Posterior cingulate gyrus (tissue), 11 donors: ENCODE measurements at regions of chr10 and their contacts with region 1.

Region 1: DNA sequence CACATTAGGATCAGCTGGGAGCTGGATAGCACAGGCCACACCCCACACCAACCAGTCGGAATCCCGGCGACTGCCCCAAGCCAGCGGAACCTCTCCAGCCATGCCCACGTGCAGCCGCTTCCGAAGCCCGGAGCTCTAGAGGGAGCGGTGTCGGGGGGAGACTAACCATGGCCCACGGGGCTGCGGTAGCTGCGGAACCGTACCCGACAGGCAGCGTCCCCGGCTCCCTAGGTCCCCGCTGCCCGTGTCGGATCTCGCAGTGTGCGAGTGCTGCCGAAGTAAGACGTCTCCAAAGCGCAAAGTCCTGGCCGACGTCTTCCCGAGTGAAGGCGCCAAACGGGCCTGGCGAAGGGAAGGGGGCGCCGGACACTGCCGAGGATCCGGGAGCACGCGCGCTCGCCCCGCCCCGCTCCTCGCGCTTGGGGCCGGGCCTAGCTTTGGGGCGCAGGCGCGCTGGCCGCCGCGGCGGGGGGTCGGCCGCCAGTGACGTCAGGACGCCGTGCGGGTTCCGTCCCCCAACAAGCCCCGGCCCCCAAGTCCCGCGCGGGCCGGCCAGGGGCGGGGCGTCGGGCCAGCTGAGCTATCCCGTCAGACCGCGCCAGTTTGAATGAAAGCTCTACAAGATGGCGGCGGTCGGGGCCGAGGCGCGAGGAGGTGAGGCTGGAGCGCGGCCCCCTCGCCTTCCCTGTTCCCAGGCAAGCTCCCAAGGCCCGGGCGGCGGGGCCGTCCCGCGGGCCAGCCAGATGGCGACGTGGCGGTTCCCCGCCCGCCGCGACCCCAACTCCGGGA is at the start of gene SUV39H2:
- DNase-seq: peak; percentile 87 to 99 (median 92)

Region 2: DNA sequence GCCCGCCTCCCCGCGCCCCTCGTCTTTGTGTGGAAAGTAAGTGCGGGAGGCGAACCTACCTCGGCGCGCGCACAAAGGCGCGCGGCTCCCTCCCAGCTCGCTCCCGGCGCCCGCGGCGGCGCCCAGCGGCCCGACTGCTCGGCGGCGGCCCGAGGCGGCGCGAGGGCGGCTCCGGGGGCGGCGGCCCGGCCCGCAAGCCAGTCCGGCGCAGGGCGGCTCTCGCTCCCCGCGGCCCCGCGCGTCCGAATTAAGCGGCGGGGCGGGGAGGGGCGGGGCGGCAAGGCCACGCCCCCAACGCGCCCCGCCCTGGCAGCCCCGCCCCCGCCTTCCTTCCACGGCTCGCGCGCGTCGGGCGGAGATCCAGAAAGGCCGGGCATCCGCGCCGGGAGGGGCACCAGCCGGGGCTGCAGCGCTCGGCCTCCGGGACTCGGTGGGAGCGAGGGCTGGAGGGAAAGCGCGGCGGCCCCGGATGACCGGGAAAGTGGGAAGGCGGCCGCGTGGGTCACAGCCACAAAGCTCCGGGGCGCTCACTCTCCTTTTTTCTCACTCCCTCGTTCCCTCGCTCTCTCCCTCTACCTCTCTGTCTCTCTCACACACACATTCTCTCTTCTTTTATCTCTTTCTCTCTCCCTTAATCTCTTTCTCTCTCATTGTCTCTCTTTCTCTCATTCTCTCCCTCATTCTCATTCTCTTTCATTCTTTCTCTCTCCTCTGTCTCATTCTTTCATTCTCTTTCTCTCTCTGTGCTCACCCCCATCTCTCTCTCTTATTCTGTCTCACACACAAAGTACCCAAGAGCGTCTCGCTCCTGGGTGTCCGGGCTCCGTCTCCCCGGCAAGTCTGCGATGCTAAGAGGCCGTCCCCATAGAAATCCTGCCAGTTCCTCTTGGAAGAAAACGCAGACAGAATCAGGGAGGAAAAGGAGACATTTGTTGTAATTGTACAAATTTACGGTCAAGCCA is 274.0 kb before region 1 on chr10:
- intact Hi-C with region 1: loop called (anchors 5 kb)
- DNase-seq: peak; percentile 73 to 97 (median 79)

Region 3: DNA sequence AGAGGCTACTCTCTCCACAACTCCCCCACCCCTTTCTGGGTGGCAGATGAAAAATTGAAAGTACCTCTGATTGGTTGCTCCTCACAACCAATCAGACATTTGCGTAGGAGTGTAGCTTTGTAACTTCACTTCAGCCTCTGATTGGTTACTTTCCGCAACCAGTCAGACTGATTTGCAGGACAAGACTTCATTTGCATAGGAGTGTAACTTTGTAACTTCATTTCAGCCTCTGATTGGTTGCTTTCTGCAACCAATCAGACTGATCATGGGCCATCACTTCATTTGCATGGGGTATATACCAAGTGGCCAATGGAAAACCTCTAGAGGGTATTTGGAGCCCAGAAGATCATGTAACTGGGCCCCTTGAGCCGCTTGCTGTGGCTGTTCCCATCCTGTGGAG is 66.2 kb before region 1 on chr10:
- intact Hi-C with region 1: no loop called
- DNase-seq: no peak

Region 4: DNA sequence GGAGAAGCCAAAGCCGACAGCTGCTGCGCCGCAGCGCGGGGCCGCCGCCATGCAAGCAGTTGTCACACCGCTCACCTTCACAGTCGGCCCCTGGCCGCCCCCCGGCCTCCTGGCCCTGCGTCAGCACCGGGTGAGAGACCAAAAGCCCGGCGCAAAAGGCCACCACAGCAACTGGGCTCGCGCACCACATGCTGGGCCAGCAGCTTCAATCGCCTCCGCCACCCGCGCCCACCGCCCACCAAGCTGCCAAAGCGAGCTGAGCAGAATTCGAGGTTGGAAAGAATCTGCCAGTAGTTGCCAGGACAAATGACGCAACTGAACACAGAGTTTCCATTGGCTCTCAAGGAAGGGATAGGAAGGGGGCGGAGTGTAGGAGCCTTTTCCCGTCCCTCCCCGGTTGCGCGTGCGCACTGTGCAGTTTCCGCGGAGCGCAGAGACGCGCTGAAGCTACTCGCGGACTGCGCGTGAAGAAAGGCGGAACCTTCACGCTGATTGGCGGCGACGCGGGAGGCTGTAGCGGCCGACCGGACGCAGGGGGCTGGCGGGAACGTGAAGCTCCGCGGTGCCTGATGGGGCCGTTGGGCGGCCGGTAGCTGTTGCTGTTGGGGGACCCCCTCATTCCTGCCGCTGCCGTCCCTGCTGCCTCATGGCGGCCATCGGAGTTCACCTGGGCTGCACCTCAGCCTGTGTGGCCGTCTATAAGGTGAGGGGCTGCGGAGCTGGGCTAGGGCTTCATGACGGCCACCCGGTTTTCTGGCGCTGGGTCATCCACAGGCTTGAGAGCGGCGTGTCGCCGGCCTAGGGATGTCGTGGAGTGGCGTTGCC is 40.5 kb before region 1 on chr10 and contains the starts of genes CDNF, HSPA14 and MSANTD7:
- intact Hi-C with region 1: loop called (anchors 2 kb)
- DNase-seq: peak; percentile 98 to 100 (median 99)

Region 5: GRCh38 chr10:14904316-14904732 is 25.9 kb after region 1 on chr10:
- intact Hi-C with region 1: no loop called
- DNase-seq: no peak

Region 6: GRCh38 chr10:14959276-14960057 is 81.0 kb after region 1 on chr10 and contains the start of gene MEIG1:
- intact Hi-C with region 1: loop called (anchors 2 kb)
- DNase-seq: peak; percentile 91 to 99 (median 96)

Region 7: DNA sequence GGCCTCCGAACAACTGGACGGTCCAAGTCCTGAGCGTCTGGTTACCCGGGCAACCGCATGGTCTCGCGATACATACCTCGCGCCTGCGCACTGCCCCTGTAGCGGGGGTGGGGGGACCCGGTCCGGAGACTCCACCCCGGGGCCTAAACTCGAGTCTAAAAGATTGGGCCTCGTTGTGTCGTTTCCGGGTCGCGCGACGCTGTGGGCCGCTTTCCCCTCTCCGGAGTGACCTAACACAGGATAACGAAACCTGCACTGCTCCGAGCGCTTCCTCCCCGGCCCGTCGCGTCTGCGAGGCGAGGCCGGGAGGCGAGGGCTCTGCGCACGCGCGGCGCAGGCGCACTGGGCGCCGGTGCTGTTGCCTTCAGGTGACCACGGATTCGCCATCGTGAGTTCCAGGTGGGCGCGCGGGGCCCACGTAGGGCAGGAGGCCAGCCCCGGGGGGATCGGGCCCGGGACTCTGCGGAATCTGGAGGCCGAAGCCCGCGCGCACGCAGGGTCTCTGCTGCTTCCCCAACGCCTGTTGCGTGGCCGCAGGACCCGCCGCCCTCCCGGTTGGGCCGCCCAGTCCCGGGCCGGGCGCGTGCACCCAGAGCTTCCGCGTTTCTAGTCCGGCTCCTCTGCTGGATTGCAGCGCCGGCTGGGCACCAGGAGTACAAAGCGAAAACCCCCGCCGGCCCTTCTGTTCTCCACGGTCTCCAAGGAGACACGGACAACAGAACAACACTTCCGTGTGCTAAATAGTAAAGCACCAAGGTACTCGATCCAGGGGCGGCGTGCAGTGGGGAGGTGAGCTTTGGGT is 218.8 kb after region 1 on chr10 and contains the start of gene RPP38:
- intact Hi-C with region 1: loop called (anchors 5 kb)
- DNase-seq: peak; percentile 96 to 100 (median 99)